ENCODE measurements at regions of chr4 and their contacts with region 1.

Region 1: GRCh38 chr4:139453371-139454110 is 380 bp upstream of the RAB33B start:
- DNase-seq: peak; percentile 96
- H3K4me3 Mint-ChIP-seq: peak overlapping the region; percentile 90
- H3K27ac Mint-ChIP-seq: peak overlapping the region; percentile 99
- H3K4me1 Mint-ChIP-seq: peaks cover 52% of the 10 kb centered on the region
- H3K27me3 Mint-ChIP-seq: no peaks in the 10 kb centered on the region

Region 2: DNA sequence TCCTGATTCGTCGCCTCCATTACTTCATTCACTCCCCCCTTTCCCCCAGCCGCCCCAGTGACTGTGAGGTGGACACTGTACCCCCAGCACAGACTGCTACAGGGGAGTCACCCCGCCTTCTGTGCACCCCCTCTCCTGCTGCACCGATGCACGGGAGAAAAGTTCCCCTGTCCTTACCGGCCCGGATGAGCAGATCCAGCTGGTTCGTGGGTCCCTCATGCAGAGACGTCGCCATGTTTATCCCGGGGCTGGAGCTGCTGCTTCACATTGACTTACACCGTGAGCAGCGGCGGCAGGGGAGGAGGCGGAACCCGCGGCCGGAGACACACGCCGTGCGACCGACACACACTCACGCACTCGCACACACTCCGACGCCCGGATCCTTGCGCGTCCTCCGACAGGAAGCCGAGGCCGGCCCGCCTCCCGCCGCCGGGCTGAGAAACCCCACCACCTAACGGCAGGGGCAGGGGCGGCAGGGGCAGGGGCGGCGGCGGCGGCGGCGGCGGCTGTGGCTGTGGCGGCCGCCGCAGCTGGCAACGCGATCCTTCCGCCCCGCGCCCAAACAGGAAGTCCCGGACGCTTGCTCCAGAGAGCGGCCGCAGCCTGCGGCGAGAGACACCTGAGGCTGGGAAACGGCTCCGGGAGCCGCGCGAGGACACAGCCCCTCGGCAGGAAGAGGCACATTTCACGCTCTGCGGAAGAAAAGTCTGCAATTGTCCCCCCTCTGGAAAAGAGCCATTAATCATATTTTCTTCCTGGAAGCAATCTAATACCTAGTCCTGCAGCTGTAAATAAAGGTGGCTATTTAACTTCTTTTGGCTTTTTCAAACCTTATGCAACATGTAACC is 369.4 kb before region 1 on chr4:
- intact Hi-C with region 1: loop called (anchors 5 kb)
- DNase-seq: peak; percentile 81
- H3K4me3 Mint-ChIP-seq: peak overlapping the region; percentile 99
- H3K27ac Mint-ChIP-seq: peak overlapping the region; percentile 99
- H3K4me1 Mint-ChIP-seq: peaks cover 30% of the 10 kb centered on the region
- H3K27me3 Mint-ChIP-seq: no peaks in the 10 kb centered on the region

Region 3: DNA sequence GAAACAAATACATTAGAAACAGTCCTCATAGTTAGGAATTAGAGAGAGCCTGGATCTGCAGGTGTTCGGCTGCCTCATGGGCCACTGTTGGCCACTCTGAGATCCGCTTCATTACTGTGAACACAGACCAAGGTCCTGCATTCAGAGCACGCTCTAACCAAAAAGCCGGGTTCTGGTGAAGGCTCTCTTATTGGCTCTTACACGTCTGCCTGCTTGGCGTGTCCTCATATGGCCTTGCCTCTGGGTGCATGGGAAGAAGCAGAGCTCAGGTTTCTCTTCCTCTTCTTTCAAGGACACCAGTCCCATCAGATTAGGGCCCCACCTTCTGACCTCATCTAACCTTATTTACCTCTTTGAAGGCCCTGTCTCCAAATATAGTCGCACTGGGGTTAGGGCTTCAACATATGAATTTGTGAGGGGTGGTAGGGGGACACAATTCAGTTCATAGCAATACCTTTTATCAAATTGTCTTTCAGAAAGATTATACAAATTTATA is 239.5 kb before region 1 on chr4:
- intact Hi-C with region 1: no loop called
- DNase-seq: no peak
- H3K4me3 Mint-ChIP-seq: no peak overlapping the region
- H3K27ac Mint-ChIP-seq: no peak overlapping the region
- H3K4me1 Mint-ChIP-seq: no peaks in the 10 kb centered on the region
- H3K27me3 Mint-ChIP-seq: peaks cover 7% of the 10 kb centered on the region

Region 4: GRCh38 chr4:139301113-139301820 is 152.3 kb before region 1 on chr4 and contains the start of gene NAA15:
- intact Hi-C with region 1: loop called (anchors 2 kb)
- DNase-seq: peak; percentile 98
- H3K4me3 Mint-ChIP-seq: peak within 1 kb of the TSS; percentile 98
- H3K27ac Mint-ChIP-seq: peak within 1 kb of the TSS; percentile 99
- H3K4me1 Mint-ChIP-seq: peaks cover 48% of the 10 kb centered on the region
- H3K27me3 Mint-ChIP-seq: no peaks in the 10 kb centered on the region
- total RNA-seq, gene NAA15: 86.7 and 97.4 TPM in 2 replicates

Region 5: GRCh38 chr4:139530833-139531427 is 77.4 kb after region 1 on chr4:
- intact Hi-C with region 1: loop called (anchors 2 kb)
- DNase-seq: peak; percentile 24
- H3K4me3 Mint-ChIP-seq: no peak overlapping the region
- H3K27ac Mint-ChIP-seq: no peak overlapping the region
- H3K4me1 Mint-ChIP-seq: peaks cover 8% of the 10 kb centered on the region
- H3K27me3 Mint-ChIP-seq: no peaks in the 10 kb centered on the region

Region 6: GRCh38 chr4:139665690-139666529 is 212.4 kb after region 1 on chr4 and contains the start of gene MGST2:
- intact Hi-C with region 1: loop called (anchors 2 kb)
- DNase-seq: peak; percentile 25
- H3K4me3 Mint-ChIP-seq: peak within 1 kb of the TSS; percentile 84
- H3K27ac Mint-ChIP-seq: peak within 1 kb of the TSS; percentile 87
- H3K4me1 Mint-ChIP-seq: peaks cover 33% of the 10 kb centered on the region
- H3K27me3 Mint-ChIP-seq: no peaks in the 10 kb centered on the region
- total RNA-seq, gene MGST2: 29.5 and 32.5 TPM in 2 replicates

Region 7: GRCh38 chr4:140523857-140524742 is 1070.6 kb after region 1 on chr4 and contains the start of gene ELMOD2:
- intact Hi-C with region 1: loop called (anchors 10 kb)
- DNase-seq: peak; percentile 97
- H3K4me3 Mint-ChIP-seq: peak within 1 kb of the TSS; percentile 85
- H3K27ac Mint-ChIP-seq: peak within 1 kb of the TSS; percentile 49
- H3K4me1 Mint-ChIP-seq: peaks cover 11% of the 10 kb centered on the region
- H3K27me3 Mint-ChIP-seq: peaks cover 6% of the 10 kb centered on the region
- total RNA-seq, gene ELMOD2: 15.3 and 16.0 TPM in 2 replicates